CD4-positive, alpha-beta T cell (primary cell): ENCODE measurements at regions of chr18 and their contacts with region 1.

Region 1: DNA sequence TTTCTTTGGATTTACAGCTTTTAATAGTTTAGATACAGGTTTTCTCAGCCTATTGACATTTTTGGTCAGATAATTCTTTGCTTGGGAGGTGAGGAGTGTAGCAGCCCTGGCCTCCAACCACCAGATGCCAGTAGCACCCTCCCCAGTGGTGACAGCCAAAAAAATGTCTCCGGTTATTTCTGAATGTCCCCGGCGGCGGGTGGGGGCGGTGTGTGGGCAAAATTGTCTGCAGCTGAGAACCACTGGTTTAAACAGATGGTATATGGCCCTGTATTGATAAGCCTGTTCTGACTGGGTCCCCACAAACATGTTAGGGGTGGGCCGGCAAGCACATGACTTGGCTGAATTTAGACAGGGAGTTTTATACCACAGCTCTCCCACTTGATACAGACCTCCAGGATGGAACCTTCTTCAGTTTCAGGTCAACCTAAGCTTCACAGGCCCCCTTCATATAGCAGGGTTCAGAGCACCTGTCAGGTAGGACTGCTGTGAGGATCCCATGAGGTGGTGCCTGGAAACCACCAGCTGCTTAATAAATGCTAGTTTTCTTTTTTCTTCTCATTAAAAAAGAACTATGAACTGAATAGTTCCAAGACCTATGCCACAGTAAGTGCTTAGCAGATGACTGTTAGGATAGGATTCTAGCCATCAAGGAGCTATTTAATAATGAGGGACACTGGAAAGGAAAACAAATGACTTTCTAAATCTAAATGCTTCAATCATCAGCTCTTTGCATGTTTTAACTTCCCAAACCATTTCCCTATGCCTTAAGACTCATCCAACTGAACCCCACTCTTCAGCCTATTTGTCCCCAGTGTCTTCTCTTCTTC is 18.1 kb downstream of the LPIN2 start:
- DNase-seq: peak; percentile 54 to 87 (median 68)
- ATAC-seq: peak; percentile 82
- H3K4me3 ChIP-seq: peak overlapping the region; percentile 24
- H3K4me3 Mint-ChIP-seq: peak overlapping the region; percentile 52
- H3K27ac ChIP-seq: no peak overlapping the region
- H3K27ac Mint-ChIP-seq: peak overlapping the region; percentile 61
- H3K4me1 ChIP-seq: peaks cover 61% of the 10 kb centered on the region
- H3K4me1 Mint-ChIP-seq: peaks cover 82% of the 10 kb centered on the region
- H3K27me3 ChIP-seq: no peaks in the 10 kb centered on the region
- H3K27me3 Mint-ChIP-seq: no peaks in the 10 kb centered on the region
- CTCF ChIP-seq: peak; percentile 75

Region 2: DNA sequence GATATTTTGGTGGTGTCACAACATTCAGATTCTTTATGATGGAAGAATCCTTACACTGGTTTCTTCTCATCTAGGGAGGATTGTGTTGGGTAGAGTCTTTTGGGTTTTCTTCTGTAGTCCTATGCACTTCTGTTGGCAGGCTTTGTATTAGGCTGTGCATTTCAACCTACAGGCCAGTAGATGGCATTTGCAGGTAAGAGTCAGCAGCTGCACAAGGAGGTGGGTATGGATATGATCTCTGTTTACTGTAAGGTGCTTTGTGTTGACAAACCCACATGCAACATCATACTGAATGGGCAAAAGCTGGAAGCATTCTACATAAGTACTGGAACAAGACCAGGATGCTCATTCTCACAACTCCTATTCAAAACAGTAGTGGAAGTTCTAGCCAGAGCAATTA is 1080.3 kb before region 1 on chr18:
- CTCF ChIA-PET with region 1: no interaction called
- POLR2A ChIA-PET with region 1: no interaction called
- intact Hi-C with region 1: no loop called
- DNase-seq: no peak
- ATAC-seq: no peak
- H3K4me3 ChIP-seq: no peak overlapping the region
- H3K4me3 Mint-ChIP-seq: no peak overlapping the region
- H3K27ac ChIP-seq: no peak overlapping the region
- H3K27ac Mint-ChIP-seq: no peak overlapping the region
- H3K4me1 ChIP-seq: no peaks in the 10 kb centered on the region
- H3K4me1 Mint-ChIP-seq: no peaks in the 10 kb centered on the region
- H3K27me3 ChIP-seq: no peaks in the 10 kb centered on the region
- H3K27me3 Mint-ChIP-seq: no peaks in the 10 kb centered on the region
- CTCF ChIP-seq: no peak

Region 3: DNA sequence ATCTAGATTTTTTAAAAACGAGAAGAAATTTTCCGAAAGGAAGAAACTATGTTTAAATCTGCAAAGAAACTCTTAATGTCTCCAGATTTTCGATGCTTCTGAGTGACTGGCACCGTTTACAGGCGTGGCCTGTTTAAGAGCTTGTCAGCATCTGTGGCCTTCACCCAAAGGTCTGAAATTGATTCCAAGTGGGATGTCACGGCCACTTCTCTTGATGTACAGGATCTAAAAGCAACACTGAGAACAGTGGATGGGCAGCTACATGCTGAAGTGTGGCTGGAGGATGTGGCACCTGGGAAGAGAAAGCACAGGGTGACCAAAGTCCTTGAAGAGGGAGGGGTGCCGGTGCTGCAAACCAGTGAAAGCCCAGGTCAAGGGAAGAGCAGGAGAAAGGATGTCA is 120.1 kb before region 1 on chr18:
- CTCF ChIA-PET with region 1: no interaction called
- POLR2A ChIA-PET with region 1: no interaction called
- intact Hi-C with region 1: no loop called
- DNase-seq: no peak
- ATAC-seq: no peak
- H3K4me3 ChIP-seq: no peak overlapping the region
- H3K4me3 Mint-ChIP-seq: no peak overlapping the region
- H3K27ac ChIP-seq: no peak overlapping the region
- H3K27ac Mint-ChIP-seq: no peak overlapping the region
- H3K4me1 ChIP-seq: no peaks in the 10 kb centered on the region
- H3K4me1 Mint-ChIP-seq: no peaks in the 10 kb centered on the region
- H3K27me3 ChIP-seq: no peaks in the 10 kb centered on the region
- H3K27me3 Mint-ChIP-seq: no peaks in the 10 kb centered on the region
- CTCF ChIP-seq: no peak

Region 4: GRCh38 chr18:2932247-2933181 is 62.3 kb before region 1 on chr18:
- CTCF ChIA-PET with region 1: interaction called, 12 read pairs
- POLR2A ChIA-PET with region 1: interaction called, 3 read pairs
- intact Hi-C with region 1: no loop called
- DNase-seq: peak in 8 of 14 experiments; percentile 13 to 84 (median 51)
- ATAC-seq: peak; percentile 80
- H3K4me3 ChIP-seq: no peak overlapping the region
- H3K4me3 Mint-ChIP-seq: no peak overlapping the region
- H3K27ac ChIP-seq: peak overlapping the region; percentile 18 to 51
- H3K27ac Mint-ChIP-seq: peak overlapping the region; percentile 67
- H3K4me1 ChIP-seq: peaks cover 9% of the 10 kb centered on the region
- H3K4me1 Mint-ChIP-seq: peaks cover 36% of the 10 kb centered on the region
- H3K27me3 ChIP-seq: no peaks in the 10 kb centered on the region
- H3K27me3 Mint-ChIP-seq: no peaks in the 10 kb centered on the region
- CTCF ChIP-seq: peak; percentile 92

Region 5: DNA sequence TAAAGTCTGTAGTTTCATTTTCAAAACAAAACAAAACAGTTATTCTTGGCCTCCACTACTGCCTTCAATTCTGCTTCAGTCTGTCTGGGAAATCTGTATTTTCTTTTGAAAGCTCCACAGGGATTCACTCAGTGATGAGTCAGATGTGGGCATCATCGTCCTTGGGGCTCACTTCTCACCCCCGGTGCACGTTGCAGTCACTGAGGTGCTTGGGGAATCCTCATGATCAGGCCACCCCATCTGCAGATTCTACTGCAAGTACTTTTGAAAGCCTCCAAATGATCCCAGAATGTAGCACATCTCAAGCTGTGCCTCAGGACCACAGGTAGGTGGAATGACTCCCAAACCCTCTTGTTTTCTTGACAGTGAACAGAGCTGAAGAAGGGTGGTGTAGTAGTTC is 16.2 kb before region 1 on chr18:
- CTCF ChIA-PET with region 1: interaction called, 10 read pairs
- POLR2A ChIA-PET with region 1: interaction called, 12 read pairs
- intact Hi-C with region 1: no loop called
- DNase-seq: peak in 4 of 14 experiments; percentile 39 to 63 (median 56)
- ATAC-seq: peak; percentile 10
- H3K4me3 ChIP-seq: peak overlapping the region; percentile 41
- H3K4me3 Mint-ChIP-seq: peak overlapping the region; percentile 88
- H3K27ac ChIP-seq: peak overlapping the region; percentile 77 to 80
- H3K27ac Mint-ChIP-seq: peak overlapping the region; percentile 89
- H3K4me1 ChIP-seq: peaks cover 66% of the 10 kb centered on the region
- H3K4me1 Mint-ChIP-seq: peaks cover 90% of the 10 kb centered on the region
- H3K27me3 ChIP-seq: no peaks in the 10 kb centered on the region
- H3K27me3 Mint-ChIP-seq: no peaks in the 10 kb centered on the region
- CTCF ChIP-seq: no peak

Region 6: GRCh38 chr18:3012964-3013804 is 18.4 kb after region 1 on chr18 and contains the start of gene LPIN2:
- CTCF ChIA-PET with region 1: interaction called, 11 read pairs
- POLR2A ChIA-PET with region 1: interaction called, 16 read pairs
- intact Hi-C with region 1: loop called (anchors 2 kb)
- DNase-seq: peak; percentile 93 to 99 (median 96)
- ATAC-seq: peak; percentile 91
- H3K4me3 ChIP-seq: peak within 1 kb of the TSS; percentile 68
- H3K4me3 Mint-ChIP-seq: peak within 1 kb of the TSS; percentile 94
- H3K27ac ChIP-seq: peak within 1 kb of the TSS; percentile 34 to 59
- H3K27ac Mint-ChIP-seq: peak within 1 kb of the TSS; percentile 92
- H3K4me1 ChIP-seq: peaks cover 74% of the 10 kb centered on the region
- H3K4me1 Mint-ChIP-seq: peaks cover 72% of the 10 kb centered on the region
- H3K27me3 ChIP-seq: no peaks in the 10 kb centered on the region
- H3K27me3 Mint-ChIP-seq: no peaks in the 10 kb centered on the region
- CTCF ChIP-seq: no peak
- total RNA-seq, gene LPIN2: 48.7 to 49.0 TPM

Region 7: DNA sequence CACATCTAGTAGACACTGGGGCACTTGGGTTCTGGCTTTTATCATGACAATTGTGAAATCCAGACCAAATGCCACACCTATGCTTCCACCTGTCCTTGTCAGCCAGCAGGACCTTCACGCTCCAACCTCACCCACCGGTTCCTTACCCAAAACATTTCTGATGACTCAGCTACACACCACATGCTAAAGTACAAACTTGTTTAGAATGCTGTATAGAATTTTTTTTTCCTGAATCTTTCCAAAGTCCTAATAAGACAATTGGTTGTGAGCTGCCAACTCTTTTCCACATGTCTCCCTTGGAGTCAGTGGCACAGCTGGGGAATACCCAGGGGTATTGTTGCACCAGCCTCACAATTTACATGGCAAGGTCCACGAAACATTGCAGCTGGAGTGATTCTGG is 93.6 kb after region 1 on chr18:
- CTCF ChIA-PET with region 1: no interaction called
- POLR2A ChIA-PET with region 1: no interaction called
- intact Hi-C with region 1: no loop called
- DNase-seq: no peak
- ATAC-seq: no peak
- H3K4me3 ChIP-seq: no peak overlapping the region
- H3K4me3 Mint-ChIP-seq: no peak overlapping the region
- H3K27ac ChIP-seq: no peak overlapping the region
- H3K27ac Mint-ChIP-seq: no peak overlapping the region
- H3K4me1 ChIP-seq: peaks cover 7% of the 10 kb centered on the region
- H3K4me1 Mint-ChIP-seq: peaks cover 10% of the 10 kb centered on the region
- H3K27me3 ChIP-seq: no peaks in the 10 kb centered on the region
- H3K27me3 Mint-ChIP-seq: no peaks in the 10 kb centered on the region
- CTCF ChIP-seq: no peak

Region 8: DNA sequence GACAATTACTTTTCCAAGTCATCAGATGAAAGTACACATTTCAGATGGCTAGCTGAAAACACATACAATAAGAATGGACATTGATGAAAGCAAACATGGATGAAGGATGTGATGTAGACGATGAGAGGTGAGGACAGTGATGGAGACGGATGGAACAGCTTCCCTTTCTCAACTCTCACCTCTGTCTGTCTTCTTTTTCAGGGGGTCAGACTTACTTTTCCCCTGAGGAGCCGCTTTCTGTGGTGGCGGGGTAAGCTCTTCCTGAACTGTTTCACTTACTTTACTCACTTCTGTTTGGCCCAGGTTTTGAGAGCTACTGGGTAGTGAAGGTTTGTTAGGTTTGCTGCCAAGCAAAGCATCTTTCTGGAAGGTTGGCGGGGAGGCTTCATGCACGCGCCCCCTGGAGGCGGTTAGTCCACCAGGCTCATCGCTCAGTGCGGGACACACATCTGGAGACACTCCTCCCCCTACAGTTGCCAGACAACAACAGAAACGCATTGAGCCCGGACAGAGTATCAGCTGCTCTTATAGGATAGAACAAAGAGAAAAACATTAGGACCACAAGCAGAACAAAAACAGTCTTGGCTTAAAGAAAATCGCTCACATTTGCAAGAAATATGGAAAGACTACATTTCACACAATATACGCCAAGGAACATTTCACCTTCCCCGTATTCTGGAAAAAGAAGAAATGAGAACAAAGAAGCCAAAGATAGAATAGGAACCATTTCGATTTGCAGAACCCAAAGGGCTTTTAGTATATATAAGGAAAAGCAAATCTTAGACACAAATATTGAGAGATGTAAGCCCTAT is 134.4 kb after region 1 on chr18:
- CTCF ChIA-PET with region 1: interaction called, 27 read pairs
- POLR2A ChIA-PET with region 1: interaction called, 15 read pairs
- intact Hi-C with region 1: loop called (anchors 1 kb)
- DNase-seq: peak; percentile 67 to 90 (median 78)
- ATAC-seq: peak; percentile 99
- H3K4me3 ChIP-seq: no peak overlapping the region
- H3K4me3 Mint-ChIP-seq: no peak overlapping the region
- H3K27ac ChIP-seq: no peak overlapping the region
- H3K27ac Mint-ChIP-seq: no peak overlapping the region
- H3K4me1 ChIP-seq: peaks cover 5% of the 10 kb centered on the region
- H3K4me1 Mint-ChIP-seq: peaks cover 6% of the 10 kb centered on the region
- H3K27me3 ChIP-seq: no peaks in the 10 kb centered on the region
- H3K27me3 Mint-ChIP-seq: no peaks in the 10 kb centered on the region
- CTCF ChIP-seq: peak; percentile 94

Region 9: DNA sequence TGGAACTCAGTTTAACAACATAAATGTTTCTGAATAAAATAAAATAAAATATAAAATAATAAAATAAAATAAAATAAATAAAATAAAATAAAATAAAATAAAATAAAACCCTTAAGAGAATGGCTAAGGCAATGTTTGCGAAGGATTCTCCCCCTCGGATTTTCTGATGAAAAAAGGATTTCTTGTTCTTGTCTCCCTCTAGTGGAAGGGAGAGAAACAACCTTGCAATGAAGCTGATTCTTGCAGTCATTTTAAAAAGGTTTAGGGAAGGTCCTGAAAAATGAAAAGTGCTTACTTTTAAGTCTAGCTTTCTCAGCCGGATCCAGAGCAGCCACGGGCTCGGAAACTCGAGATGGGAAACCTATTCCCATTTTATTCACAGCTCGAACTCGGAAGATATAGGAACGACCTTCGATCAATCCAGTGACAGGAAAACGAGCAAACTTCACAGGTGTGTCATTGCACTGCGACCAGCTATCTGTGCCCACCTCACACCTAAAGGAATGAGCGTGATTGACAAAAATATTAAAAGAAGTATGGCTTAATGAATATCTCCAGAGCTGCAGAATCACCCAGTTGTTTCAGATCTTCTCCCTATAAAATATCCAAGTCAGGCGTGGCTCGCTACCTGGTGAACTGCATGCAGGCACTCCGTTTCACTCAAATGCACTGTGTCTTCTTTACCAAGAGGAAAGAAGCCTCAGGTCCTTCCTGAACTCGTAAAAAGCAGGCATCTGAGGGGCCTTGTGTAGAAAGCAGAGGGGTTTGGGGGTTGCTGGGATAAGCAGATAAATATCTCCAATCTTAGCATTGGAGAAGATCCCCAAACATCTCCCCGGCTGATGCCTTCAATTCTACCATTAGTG is 156.8 kb after region 1 on chr18:
- CTCF ChIA-PET with region 1: interaction called, 26 read pairs
- POLR2A ChIA-PET with region 1: interaction called, 6 read pairs
- intact Hi-C with region 1: loop called (anchors 1 kb)
- DNase-seq: peak in 3 of 14 experiments; percentile 49 to 60 (median 58)
- ATAC-seq: no peak
- H3K4me3 ChIP-seq: no peak overlapping the region
- H3K4me3 Mint-ChIP-seq: no peak overlapping the region
- H3K27ac ChIP-seq: no peak overlapping the region
- H3K27ac Mint-ChIP-seq: no peak overlapping the region
- H3K4me1 ChIP-seq: peaks cover 4% of the 10 kb centered on the region
- H3K4me1 Mint-ChIP-seq: peaks cover 3% of the 10 kb centered on the region
- H3K27me3 ChIP-seq: no peaks in the 10 kb centered on the region
- H3K27me3 Mint-ChIP-seq: no peaks in the 10 kb centered on the region
- CTCF ChIP-seq: peak; percentile 95